ENCODE measurements at regions of chr17 and their contacts with region 1.

Region 1: GRCh38 chr17:49210158-49211029 is at the starts of genes ABI3 and GNGT2:
- DNase-seq: no peak
- H3K4me3 ChIP-seq: no peak within 1 kb of the TSS
- H3K27ac ChIP-seq: no peak within 1 kb of the TSS
- H3K4me1 ChIP-seq: peaks cover 8% of the 10 kb centered on the region; the same call in 1 of the 2 replicates
- H3K27me3 ChIP-seq: 0 out of 2 replicates have a peak, but pooled peaks cover 7% of the 10 kb centered on the region
- CTCF ChIP-seq: no peak
- total RNA-seq, gene ABI3: not detected in 2 replicates
- total RNA-seq, gene GNGT2: 7.4 and 9.4 TPM in 2 replicates

Region 2: DNA sequence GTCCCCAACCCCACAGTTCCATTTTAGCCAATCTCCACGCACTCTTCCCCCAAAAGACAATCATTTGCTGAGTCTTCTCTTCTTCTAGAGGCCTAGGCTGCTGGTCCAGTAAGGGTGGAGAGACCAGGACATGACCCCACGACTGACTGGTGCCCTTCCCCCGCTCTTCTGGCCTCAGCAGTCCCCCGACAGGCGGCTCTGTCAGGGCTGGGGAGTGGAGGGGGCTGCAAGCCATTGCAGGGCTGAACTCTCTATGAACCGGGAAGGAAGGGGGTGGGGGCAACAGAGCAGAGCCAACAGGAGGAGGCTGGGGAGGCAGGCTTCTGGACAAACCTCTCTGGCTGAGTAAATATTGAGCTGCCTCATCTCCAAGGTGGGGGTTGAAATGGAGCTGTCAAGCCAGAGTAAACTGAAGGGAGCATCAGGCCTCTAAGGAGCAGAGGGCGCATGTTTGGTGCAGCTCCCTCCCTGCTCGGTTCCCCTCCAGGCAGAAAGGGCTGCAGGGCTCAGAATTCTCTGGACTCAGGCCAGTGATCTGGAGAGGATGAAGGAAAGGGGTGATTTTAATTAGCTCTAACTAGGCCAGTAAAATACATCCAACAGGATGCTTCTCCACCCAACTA is 688.3 kb before region 1 on chr17:
- CTCF ChIA-PET with region 1: no interaction called
- POLR2A ChIA-PET with region 1: no interaction called
- intact Hi-C with region 1: no loop called
- DNase-seq: peak; percentile 35 to 58
- H3K4me3 ChIP-seq: no peak overlapping the region
- H3K27ac ChIP-seq: no peak overlapping the region
- H3K4me1 ChIP-seq: peaks cover 24% of the 10 kb centered on the region
- H3K27me3 ChIP-seq: no peaks in the 10 kb centered on the region
- CTCF ChIP-seq: no peak

Region 3: GRCh38 chr17:48961516-48962233 is 248.7 kb before region 1 on chr17:
- CTCF ChIA-PET with region 1: no interaction called
- POLR2A ChIA-PET with region 1: interaction called, 10 read pairs
- intact Hi-C with region 1: no loop called
- DNase-seq: peak; percentile 46 to 62
- H3K4me3 ChIP-seq: peak overlapping the region; percentile 16; the same call in 1 of the 2 replicates
- H3K27ac ChIP-seq: no peak overlapping the region
- H3K4me1 ChIP-seq: peaks cover 18% of the 10 kb centered on the region
- H3K27me3 ChIP-seq: no peaks in the 10 kb centered on the region
- CTCF ChIP-seq: no peak

Region 4: GRCh38 chr17:48985436-48986245 is 224.8 kb before region 1 on chr17:
- CTCF ChIA-PET with region 1: no interaction called
- POLR2A ChIA-PET with region 1: no interaction called
- intact Hi-C with region 1: no loop called
- DNase-seq: no peak
- H3K4me3 ChIP-seq: no peak overlapping the region
- H3K27ac ChIP-seq: no peak overlapping the region
- H3K4me1 ChIP-seq: no peaks in the 10 kb centered on the region
- H3K27me3 ChIP-seq: no peaks in the 10 kb centered on the region
- CTCF ChIP-seq: no peak

Region 5: DNA sequence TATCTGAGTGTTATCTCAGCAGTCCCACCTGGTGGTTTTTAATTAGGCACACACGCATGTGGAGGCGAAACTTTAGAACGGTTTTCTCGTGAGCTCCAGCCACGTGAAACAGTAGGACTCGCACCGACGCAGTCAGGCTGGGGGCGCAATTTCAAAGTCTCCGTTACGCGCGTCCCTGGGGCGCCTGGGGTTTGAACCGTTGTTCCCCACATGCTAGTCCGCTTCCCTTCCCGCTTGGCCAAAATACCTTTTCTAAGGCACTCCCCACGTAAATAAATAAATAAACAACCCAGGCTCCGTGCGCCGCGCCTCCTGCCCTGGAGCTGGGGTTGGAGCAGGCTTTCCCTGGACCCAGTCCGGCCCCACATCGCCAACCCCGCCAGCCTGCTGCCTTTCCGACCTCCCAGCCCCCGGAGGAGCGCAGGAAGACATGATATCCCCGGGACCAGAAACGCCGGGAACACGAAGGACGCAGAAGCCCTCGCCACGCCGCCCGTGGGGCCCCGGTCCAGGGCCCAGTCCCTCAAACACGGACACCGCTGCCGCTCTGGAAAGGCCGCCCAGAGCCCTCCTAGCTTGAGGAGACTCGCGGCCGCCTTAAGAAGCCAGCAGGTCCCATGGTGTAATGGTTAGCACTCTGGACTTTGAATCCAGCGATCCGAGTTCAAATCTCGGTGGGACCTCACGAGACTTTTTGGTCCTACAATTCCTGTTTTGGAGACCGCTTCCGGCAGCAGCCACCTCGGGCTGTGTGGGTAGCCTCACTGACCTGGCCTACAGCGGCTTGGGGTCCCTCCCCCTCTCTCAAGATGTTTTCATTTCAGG is 18.3 kb before region 1 on chr17:
- CTCF ChIA-PET with region 1: no interaction called
- POLR2A ChIA-PET with region 1: interaction called, 4 read pairs
- intact Hi-C with region 1: loop called (anchors 1 kb)
- DNase-seq: peak; percentile 82 to 91
- H3K4me3 ChIP-seq: peak overlapping the region; percentile 74
- H3K27ac ChIP-seq: peak overlapping the region; percentile 87
- H3K4me1 ChIP-seq: peaks cover 12% of the 10 kb centered on the region
- H3K27me3 ChIP-seq: no peaks in the 10 kb centered on the region
- CTCF ChIP-seq: peak; percentile 40; the same call in 1 of the 2 replicates

Measured in PC-9 (cell line).